Posterior vena cava (tissue), 2 donors: ENCODE measurements at regions of chr9 and their contacts with region 1.

Region 1: DNA sequence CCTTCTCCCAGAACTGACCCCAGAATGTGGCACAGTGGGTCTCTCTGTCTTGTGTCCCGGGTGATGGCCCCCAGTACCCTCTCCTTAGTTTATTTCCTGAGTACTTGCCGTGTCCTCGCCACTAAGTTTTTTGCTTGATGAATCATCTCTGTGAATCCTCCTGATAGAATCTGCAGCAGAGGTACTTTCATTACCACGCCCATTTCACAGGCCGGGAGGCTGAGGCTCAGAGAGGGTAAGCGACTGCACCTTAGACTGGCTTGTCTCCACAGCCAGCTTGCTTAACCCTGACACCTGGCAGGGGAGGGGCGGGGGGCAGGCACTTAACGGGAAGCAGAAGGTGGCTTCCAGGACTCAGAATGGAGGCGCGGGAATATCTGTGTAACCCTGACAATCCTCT is 7.9 kb upstream of the IER5L start:
- DNase-seq: no peak

Region 2: GRCh38 chr9:129068990-129069861 is 116.8 kb before region 1 on chr9:
- intact Hi-C with region 1: no loop called
- DNase-seq: peak; percentile 90

Region 3: DNA sequence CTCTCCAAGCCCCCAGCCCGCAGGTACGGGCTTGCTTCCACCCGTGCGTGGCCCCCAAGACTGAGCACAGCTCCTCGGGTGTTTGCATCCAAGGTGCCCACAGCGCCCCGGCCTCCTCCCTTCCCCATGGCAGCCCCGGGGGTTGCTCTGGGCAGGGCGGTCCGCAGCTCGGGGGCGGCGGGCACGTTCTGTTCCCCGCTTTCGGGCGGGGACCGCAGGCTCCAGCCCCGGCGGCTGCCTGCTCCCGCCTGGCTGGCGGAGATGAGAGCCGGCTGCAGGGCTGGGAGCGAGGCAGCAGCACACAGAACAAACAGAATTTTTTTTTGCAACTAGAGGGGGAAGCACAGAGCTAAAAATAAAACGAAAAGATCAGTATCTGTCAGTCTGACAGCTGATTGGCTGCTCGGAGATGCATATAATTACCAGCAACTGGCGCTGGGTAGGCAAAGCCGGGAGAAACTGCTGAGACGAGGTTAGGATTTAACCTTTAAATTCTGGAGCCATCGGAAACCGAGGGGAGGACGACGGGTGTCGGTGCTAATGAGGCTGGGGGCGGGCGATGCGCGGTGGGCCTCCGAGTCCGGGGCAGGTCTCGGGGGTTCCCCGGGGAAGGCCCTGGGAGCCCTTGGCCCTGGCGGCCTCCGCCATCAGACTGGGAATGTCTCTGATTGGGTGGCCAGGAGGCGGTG is 134.7 kb after region 1 on chr9:
- intact Hi-C with region 1: loop called in 1 of 2 experiments (anchors 5 kb)
- DNase-seq: peak; percentile 87